Breast epithelium (tissue), 4 donors: ENCODE measurements at regions of chr2 and their contacts with region 1.

Region 1: DNA sequence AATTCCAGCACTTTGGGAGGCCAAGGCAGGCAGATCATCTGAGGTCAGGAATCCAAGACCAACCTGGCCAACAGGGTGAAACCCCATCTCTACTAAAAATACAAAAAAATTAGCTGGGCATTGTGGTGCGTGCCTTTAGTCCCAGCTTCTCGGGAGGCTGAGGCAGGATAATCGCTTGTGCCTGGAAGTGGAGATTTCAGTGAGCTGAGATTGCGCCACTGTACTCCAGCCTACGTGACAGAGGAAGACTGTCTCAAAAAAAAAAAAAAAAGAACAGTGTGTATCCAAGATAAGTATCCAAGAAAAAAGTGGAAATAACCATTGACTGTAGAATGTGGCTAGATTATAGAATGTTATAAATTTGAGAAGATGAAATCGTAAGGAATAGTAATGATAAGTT is 142.1 kb downstream of the FAM124B start:
- DNase-seq: no peak
- H3K4me3 ChIP-seq: no peak overlapping the region
- H3K27ac ChIP-seq: no peak overlapping the region
- H3K4me1 ChIP-seq: no peaks in the 10 kb centered on the region
- H3K27me3 ChIP-seq: no peaks in the 10 kb centered on the region
- CTCF ChIP-seq: no peak
- POLR2A ChIP-seq: no peak

Region 2: DNA sequence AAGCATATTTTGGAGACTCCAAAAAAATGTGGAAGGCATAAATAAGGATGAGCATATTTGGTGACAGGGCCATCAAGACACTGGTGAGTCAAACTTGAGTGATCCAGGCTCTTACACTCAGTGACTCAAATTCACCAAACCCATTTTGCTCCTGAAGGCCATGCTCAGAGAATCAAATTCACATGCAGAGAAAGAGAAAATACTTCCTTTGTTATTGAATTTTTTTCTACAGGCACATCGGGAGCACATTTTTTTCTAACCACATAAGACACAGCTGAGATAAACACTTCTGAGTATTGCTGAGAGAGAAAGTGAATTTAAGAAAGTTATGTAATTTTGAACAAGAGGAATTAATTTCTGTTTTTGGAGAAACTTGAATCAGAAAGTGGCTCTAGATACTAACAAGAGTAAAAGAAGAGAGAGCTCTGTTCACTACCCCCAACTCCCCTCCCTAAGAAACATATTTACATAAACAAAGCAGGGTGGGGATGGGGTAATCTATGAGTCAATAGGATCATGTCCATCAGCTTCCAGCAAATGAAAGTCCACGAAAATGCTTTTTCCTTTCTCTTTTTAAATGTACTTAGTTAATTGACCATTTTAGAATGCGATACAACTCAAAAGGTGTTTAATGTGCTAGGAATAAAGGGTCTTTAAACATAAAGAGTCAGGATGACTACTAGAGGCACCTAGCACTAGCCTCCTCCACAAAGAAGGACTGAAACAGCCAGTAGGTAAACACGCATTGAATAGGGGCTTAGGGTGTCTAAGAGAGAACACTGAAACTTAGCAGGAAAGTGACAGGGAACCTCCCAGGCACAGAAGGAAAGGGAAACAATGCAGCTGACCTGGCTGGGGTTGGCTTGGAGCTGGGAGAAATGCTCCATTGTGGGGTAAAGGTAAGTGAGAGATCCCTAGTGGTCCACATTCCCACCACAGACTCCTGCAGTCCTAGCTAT is 1055.6 kb before region 1 on chr2:
- intact Hi-C with region 1: loop called (anchors 5 kb)
- DNase-seq: no peak
- H3K4me3 ChIP-seq: no peak overlapping the region
- H3K27ac ChIP-seq: peak overlapping the region; percentile 48
- H3K4me1 ChIP-seq: no peaks in the 10 kb centered on the region
- H3K27me3 ChIP-seq: no peaks in the 10 kb centered on the region
- CTCF ChIP-seq: no peak
- POLR2A ChIP-seq: no peak

Region 3: DNA sequence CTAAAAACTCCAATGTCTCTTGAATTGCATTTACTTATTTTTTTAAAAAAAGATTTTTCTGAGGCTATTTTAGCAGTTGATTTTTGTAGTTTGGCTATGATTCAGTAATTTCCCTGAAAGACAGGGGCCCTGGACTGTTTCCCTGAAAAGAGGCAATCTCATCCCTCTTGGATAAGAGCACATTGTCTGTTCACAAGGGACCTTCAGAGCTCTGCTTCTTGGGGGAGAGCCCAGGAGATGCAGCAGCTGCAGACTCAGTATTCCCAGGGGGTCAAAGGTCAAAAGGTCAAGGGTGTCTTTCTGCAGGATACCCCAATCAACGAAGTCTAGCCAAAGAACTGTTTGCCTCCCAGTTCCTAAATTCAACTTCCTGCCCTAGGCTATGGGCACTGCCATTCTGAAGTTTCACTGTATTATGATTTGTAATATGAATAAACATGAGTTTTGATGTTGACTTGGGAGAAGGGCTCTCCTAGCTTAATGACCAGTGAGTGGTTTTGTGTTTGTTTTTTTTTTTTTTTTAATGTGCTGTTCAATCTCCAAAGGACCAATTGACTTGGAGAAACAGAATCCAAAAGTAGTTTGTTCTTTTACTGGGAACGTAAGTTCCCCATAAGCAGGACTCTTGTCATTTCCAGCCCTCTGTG is 63.8 kb before region 1 on chr2:
- intact Hi-C with region 1: no loop called
- DNase-seq: no peak
- H3K4me3 ChIP-seq: no peak overlapping the region
- H3K27ac ChIP-seq: no peak overlapping the region
- H3K4me1 ChIP-seq: no peaks in the 10 kb centered on the region
- H3K27me3 ChIP-seq: no peaks in the 10 kb centered on the region
- CTCF ChIP-seq: no peak
- POLR2A ChIP-seq: no peak

Region 4: DNA sequence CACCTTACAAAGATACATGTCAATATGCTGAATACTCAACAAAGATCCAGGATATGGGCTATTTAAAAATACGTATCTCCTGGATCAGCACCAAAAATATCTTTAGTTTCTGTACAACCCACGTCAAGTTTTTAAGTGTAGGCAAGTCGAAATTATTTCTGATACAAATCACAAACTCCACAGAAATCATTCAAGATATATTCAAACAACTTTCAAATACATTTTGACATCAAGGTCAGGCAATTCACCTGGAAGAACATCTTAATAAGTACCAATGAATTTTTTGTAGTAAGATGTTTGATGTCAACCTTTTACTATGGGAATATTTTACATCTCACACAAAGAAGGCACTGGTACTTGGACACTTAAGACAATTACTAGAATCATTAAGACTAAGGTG is 239.2 kb after region 1 on chr2:
- intact Hi-C with region 1: no loop called
- DNase-seq: no peak
- H3K4me3 ChIP-seq: no peak overlapping the region
- H3K27ac ChIP-seq: no peak overlapping the region
- H3K4me1 ChIP-seq: no peaks in the 10 kb centered on the region
- H3K27me3 ChIP-seq: no peaks in the 10 kb centered on the region
- CTCF ChIP-seq: no peak
- POLR2A ChIP-seq: no peak